ENCODE measurements at regions of chr17 and their contacts with region 1.

Region 1: GRCh38 chr17:41864836-41865595 is at the start of gene KLHL11:
- DNase-seq: peak; percentile 78 to 88 (median 86)
- ATAC-seq: peak; percentile 97
- H3K4me3 ChIP-seq: peak within 1 kb of the TSS; percentile 89
- H3K4me3 Mint-ChIP-seq: no peak within 1 kb of the TSS
- H3K27ac ChIP-seq: peak within 1 kb of the TSS; percentile 90
- H3K27ac Mint-ChIP-seq: peak within 1 kb of the TSS in 4 of 9 donors; percentile 73 to 92 (median 90)
- H3K4me1 ChIP-seq: peaks cover 25 to 31% of the 10 kb centered on the region in 2 donors
- H3K4me1 Mint-ChIP-seq: peaks cover 15 to 43% (median 32%) of the 10 kb centered on the region in 7 donors
- H3K27me3 ChIP-seq: no peaks in the 10 kb centered on the region
- H3K27me3 Mint-ChIP-seq: no peaks in the 10 kb centered on the region
- total RNA-seq, gene KLHL11: 15.2 to 25.9 (median 18.9) TPM

Region 2: GRCh38 chr17:41688699-41689496 is 176.1 kb before region 1 on chr17 and contains the start of gene EIF1:
- CTCF ChIA-PET with region 1: no interaction called
- POLR2A ChIA-PET with region 1: interaction called, 13 read pairs
- intact Hi-C with region 1: loop called in 1 of 2 experiments (anchors 2 kb)
- DNase-seq: peak; percentile 98 to 100 (median 99)
- ATAC-seq: peak; percentile 85
- H3K4me3 ChIP-seq: peak within 1 kb of the TSS; percentile 86
- H3K4me3 Mint-ChIP-seq: peak within 1 kb of the TSS; percentile 90 to 99 (median 96)
- H3K27ac ChIP-seq: peak within 1 kb of the TSS; percentile 99
- H3K27ac Mint-ChIP-seq: peak within 1 kb of the TSS; percentile 98 to 99 (median 99)
- H3K4me1 ChIP-seq: peaks cover 22 to 25% of the 10 kb centered on the region in 2 donors
- H3K4me1 Mint-ChIP-seq: peaks cover 13 to 43% (median 35%) of the 10 kb centered on the region in 7 donors
- H3K27me3 ChIP-seq: no peaks in the 10 kb centered on the region
- H3K27me3 Mint-ChIP-seq: peaks cover 0 to 9% (median 0%) of the 10 kb centered on the region in 5 donors
- total RNA-seq, gene EIF1: 710 to 2,222 (median 934) TPM

Region 3: DNA sequence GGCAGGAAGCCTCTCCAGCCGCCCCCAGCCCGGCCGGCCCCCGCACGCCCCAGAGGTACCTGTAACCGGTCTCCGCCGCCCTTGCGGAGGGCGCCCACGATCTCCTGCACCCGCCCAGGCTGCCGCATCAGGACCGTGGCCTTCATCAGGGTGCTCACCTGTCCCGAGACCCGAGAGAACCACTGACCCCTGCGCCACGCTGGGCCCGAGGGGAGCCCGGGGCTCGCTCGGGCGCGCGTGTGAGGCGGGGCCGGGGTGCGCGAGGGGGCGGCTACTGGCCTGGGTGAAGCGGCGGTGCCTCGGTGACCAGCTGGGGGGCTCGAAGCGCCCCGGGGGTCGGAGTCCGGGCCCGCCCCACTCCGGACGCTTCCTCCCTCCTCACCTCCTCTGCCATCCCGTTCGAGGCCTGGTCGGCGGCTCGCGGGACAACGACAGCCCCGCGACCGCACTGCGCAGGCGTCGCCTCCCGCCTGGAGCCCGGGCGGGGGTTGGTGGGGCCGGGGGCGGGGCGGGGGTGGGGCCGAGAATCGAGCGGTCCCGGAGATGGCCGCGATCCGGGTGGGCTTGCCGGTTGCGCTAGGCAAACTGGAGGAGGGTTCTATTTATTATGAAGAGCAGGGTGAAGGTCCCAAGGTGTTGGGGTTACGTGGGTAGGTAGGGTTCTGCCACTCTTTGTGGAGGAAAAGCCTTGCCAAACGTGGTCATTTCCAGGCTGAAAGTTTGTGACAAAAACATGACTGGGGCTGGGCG is 29.0 kb before region 1 on chr17 and contains the start of gene NT5C3B:
- CTCF ChIA-PET with region 1: interaction called, 4 read pairs
- POLR2A ChIA-PET with region 1: interaction called, 17 read pairs
- intact Hi-C with region 1: loop called (anchors 1 kb)
- DNase-seq: peak; percentile 20 to 66 (median 49)
- ATAC-seq: peak; percentile 93
- H3K4me3 ChIP-seq: peak within 1 kb of the TSS; percentile 62
- H3K4me3 Mint-ChIP-seq: peak within 1 kb of the TSS; percentile 77 to 92 (median 89)
- H3K27ac ChIP-seq: peak within 1 kb of the TSS; percentile 81
- H3K27ac Mint-ChIP-seq: peak within 1 kb of the TSS; percentile 75 to 92 (median 86)
- H3K4me1 ChIP-seq: peaks cover 9 to 14% of the 10 kb centered on the region in 2 donors
- H3K4me1 Mint-ChIP-seq: peaks cover 10 to 21% (median 16%) of the 10 kb centered on the region in 7 donors
- H3K27me3 ChIP-seq: no peaks in the 10 kb centered on the region
- H3K27me3 Mint-ChIP-seq: peaks cover 0 to 4% (median 0%) of the 10 kb centered on the region in 5 donors
- total RNA-seq, gene NT5C3B: 26.8 to 41.7 (median 37.2) TPM

Region 4: DNA sequence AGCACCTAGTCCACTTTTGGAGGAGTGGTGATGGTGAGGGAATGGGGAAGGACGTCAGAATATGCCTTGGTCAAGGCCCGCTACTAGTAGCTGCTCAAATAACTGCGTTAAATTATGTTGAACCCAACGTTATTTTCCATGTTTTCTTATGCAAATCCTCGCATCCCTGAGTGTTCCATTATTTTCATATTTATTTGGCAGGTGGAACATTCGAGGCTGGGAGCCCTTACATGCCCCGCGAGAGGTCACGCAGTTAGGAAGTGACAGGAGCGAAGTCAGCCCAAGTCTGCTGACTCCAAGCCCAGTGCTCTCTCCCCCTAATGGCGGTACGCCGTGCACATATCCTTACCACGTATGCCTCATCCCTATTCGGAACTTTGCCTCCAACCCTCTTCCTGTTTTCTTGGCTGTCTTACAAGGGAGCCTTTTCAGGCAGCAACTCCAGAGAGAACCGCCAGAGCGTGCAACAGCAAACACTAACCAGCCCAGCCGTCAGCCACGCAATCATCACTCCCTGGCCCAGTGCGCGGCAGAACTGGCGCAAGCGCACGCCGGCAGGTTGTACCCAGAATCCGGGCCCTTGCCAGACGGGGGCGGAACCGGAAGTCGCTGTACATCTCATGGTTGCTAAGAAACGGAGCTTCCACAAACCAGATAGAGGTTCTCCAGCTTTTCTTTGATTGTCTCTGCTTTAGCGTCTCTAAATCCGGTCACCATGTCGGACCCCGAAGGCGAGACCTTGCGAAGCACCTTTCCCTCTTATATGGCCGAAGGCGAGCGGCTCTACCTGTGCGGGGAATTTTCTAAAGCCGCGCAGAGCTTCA is 65.2 kb after region 1 on chr17 and contains the start of gene ODAD4:
- CTCF ChIA-PET with region 1: interaction called, 4 read pairs
- POLR2A ChIA-PET with region 1: no interaction called
- intact Hi-C with region 1: loop called in 1 of 2 experiments (anchors 1 kb)
- DNase-seq: peak; percentile 87 to 98 (median 97)
- ATAC-seq: peak; percentile 98
- H3K4me3 ChIP-seq: peak within 1 kb of the TSS; percentile 79
- H3K4me3 Mint-ChIP-seq: peak within 1 kb of the TSS; percentile 93 to 100 (median 96)
- H3K27ac ChIP-seq: peak within 1 kb of the TSS; percentile 84
- H3K27ac Mint-ChIP-seq: peak within 1 kb of the TSS; percentile 90 to 100 (median 96)
- H3K4me1 ChIP-seq: peaks cover 9 to 11% of the 10 kb centered on the region in 2 donors
- H3K4me1 Mint-ChIP-seq: peaks cover 18 to 52% (median 24%) of the 10 kb centered on the region in 7 donors
- H3K27me3 ChIP-seq: no peaks in the 10 kb centered on the region
- H3K27me3 Mint-ChIP-seq: no peaks in the 10 kb centered on the region
- total RNA-seq, gene ODAD4: 0.16 to 4.1 (median 1.6) TPM in 4 of 5 experiments, not detected in the other

Region 5: DNA sequence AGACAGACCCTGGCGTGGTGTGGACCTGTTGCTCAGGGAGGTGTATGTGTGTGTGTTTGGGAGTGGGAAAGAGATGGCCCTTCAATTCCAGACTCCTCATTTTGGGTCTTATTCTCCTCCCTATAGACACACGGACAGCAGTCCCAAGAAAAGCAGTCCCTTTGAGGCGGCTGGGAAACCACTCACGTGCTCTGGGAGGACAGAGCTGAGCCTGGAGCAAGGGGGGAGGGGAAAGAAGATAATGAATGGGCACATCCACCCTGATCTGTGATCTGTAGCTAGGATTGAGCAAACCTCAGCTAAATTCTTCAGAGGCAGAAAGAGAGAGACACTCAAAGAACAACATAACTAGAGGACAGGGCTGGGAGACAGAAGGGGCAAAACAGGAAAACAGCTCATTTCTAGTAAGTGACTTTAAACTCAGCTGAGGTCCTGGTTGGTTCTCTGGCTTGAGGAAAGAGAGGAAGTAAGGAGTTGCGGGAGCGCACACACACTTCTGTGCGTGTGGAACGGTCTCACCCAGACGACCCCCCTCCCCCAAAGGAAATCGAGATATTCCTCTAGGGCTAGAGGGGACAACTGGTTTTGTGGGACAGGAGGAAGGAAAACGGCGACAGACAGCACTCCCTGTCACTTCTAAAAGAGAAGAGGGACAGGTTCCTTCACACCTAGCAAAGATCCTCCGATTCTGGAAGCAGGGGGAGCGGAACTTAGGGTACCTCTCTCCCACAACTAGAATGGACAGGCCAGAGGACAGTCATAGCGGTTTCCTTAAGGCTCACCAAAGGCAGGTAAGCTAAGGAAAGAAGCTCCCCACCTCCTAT is 289.1 kb after region 1 on chr17:
- CTCF ChIA-PET with region 1: no interaction called
- POLR2A ChIA-PET with region 1: no interaction called
- intact Hi-C with region 1: loop called in 1 of 2 experiments (anchors 1 kb)
- DNase-seq: no peak
- ATAC-seq: no peak
- H3K4me3 ChIP-seq: peak overlapping the region; percentile 76
- H3K4me3 Mint-ChIP-seq: peak overlapping the region; percentile 81 to 97 (median 94)
- H3K27ac ChIP-seq: peak overlapping the region; percentile 94
- H3K27ac Mint-ChIP-seq: peak overlapping the region; percentile 79 to 96 (median 93)
- H3K4me1 ChIP-seq: peaks cover 10 to 16% of the 10 kb centered on the region in 2 donors
- H3K4me1 Mint-ChIP-seq: peaks cover 21 to 43% (median 37%) of the 10 kb centered on the region in 7 donors
- H3K27me3 ChIP-seq: no peaks in the 10 kb centered on the region
- H3K27me3 Mint-ChIP-seq: no peaks in the 10 kb centered on the region

Region 6: DNA sequence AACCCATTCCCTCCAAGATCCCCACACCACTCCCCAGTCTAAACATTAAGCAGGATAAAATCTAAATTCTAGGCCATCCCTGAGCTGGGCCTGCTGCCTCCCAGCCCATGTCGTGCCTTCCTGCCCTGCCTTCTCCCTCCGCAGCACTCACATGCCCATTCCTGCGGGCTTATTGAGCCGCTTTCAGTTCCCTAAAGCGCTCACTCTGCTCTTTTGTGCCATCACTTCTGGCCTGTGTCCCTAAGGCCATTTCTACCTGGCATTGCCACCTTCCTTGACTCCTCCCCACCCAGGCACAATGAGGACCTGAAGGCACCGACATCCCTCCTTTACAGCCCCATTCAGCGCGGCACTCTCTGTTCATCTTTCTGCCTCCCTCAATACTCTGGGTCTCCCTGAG is 302.8 kb after region 1 on chr17:
- CTCF ChIA-PET with region 1: no interaction called
- POLR2A ChIA-PET with region 1: no interaction called
- intact Hi-C with region 1: no loop called
- DNase-seq: no peak
- ATAC-seq: no peak
- H3K4me3 ChIP-seq: no peak overlapping the region
- H3K4me3 Mint-ChIP-seq: no peak overlapping the region
- H3K27ac ChIP-seq: no peak overlapping the region
- H3K27ac Mint-ChIP-seq: no peak overlapping the region
- H3K4me1 ChIP-seq: no peaks in the 10 kb centered on the region
- H3K4me1 Mint-ChIP-seq: peaks cover 0 to 12% (median 0%) of the 10 kb centered on the region in 7 donors
- H3K27me3 ChIP-seq: no peaks in the 10 kb centered on the region
- H3K27me3 Mint-ChIP-seq: peaks cover 0 to 6% (median 0%) of the 10 kb centered on the region in 5 donors

Measured in naive thymus-derived CD4-positive, alpha-beta T cell (primary cell).